Activated CD4-positive, alpha-beta T cell treated with anti-CD3 and anti-CD28 coated beads for 36 hours (primary cell): ENCODE measurements at regions of chr16 and their contacts with region 1.

Region 1: DNA sequence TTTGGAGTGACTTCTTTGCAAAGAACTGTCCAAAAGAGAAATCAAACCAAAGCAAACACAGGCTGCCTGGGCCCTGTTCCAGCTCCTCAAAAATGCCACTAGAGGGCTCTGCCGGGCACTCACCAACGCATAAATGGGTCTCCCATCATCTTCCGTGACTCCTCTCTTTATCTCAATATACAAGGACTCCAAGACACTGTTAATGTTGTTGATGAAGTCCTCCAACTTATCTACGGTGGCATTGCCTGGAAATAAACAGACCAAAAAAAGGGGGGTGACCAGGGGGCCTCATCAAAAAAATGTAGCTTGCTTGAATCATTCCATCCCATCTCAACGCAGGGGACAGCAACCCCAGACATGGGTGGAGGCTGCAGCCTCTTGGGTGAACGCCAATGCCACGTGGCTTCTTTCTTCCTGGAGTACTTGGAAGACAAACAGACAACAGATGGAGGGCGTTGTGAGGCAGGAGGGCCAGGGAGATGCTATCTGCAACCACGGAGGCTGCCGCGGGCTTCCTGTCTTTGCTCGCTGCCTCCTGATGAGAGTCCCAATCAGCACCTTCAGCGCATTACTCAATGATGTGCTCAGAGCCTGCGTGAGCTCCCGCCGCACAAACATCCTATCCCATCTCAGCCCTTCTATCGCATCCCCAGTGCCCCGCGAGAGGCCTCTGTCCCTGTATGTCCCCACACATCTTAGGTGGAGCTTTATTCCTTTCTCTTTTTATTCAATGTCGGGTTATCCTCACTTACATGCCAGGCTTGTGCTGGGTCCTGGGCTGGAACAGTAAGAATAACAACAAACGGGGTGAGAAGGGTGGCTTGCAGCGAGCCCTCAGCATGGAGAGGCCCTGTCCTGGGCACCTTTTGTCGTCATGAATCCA is 32.0 kb downstream of the KDM8 start:
- DNase-seq: peak; percentile 90
- ATAC-seq: peak; percentile 44
- H3K4me3 Mint-ChIP-seq: peak overlapping the region; percentile 65
- H3K27ac Mint-ChIP-seq: peak overlapping the region; percentile 100
- H3K4me1 Mint-ChIP-seq: peaks cover 99% of the 10 kb centered on the region
- H3K27me3 Mint-ChIP-seq: no peaks in the 10 kb centered on the region

Region 2: DNA sequence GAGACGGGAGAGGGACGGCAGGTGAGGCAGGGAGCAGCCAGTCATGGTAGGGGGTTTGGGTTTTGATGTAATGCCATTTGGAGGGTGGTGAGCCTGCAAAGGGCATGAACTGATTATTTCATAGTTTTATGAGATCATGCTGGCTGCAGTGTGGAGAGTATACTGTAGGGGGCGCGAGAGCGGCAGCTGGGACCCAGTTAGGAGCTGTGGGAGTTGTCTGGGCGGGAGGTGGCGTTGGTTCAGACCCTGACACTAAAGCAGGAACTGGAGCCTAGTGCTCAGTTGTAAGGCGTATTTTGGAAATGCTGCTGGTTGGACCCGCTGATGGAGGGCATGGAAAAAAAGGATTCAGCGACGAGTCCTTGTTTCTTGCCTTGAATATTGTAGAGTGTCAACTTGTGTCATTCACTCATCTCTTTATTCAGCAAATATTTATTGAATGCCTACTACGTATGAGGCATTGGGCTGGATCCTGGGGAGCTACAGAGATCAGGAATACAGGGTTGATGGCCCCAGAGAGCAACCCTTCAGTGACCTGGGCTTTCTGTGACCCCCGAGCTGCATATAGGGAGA is 55.7 kb before region 1 on chr16:
- CTCF ChIA-PET with region 1: interaction called, 20 read pairs
- POLR2A ChIA-PET with region 1: interaction called, 4 read pairs
- intact Hi-C with region 1: loop called (anchors 1 to 2 kb)
- DNase-seq: peak; percentile 95
- ATAC-seq: peak; percentile 91
- H3K4me3 Mint-ChIP-seq: no peak overlapping the region
- H3K27ac Mint-ChIP-seq: peak overlapping the region; percentile 80
- H3K4me1 Mint-ChIP-seq: peaks cover 48% of the 10 kb centered on the region
- H3K27me3 Mint-ChIP-seq: no peaks in the 10 kb centered on the region

Region 3: GRCh38 chr16:27253526-27253930 is 18.2 kb after region 1 on chr16:
- CTCF ChIA-PET with region 1: interaction called, 63 read pairs
- POLR2A ChIA-PET with region 1: interaction called, 30 read pairs
- intact Hi-C with region 1: loop called (anchors 1 to 2 kb)
- DNase-seq: no peak
- ATAC-seq: peak; percentile 63
- H3K4me3 Mint-ChIP-seq: peak overlapping the region; percentile 41
- H3K27ac Mint-ChIP-seq: peak overlapping the region; percentile 88
- H3K4me1 Mint-ChIP-seq: peaks cover 82% of the 10 kb centered on the region
- H3K27me3 Mint-ChIP-seq: no peaks in the 10 kb centered on the region

Region 4: DNA sequence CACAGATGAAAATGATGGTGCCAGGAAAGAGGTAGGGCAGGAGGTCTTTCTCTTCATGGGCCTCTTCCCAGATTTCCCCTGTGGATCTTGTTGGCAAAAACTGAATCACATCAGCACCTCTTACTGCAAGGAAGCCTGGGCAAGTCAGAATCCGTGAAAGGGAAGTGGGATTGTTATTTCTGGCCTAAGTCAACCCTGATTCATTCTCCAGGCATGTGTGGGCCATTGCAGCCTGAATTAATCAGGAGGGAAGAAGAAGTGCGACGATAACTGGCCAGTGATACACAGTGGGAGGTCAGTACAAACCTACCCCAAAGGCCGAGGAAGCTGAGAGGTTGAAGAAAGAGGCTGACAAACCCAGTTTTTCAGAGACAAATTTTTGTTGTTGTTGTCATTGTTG is 51.2 kb after region 1 on chr16:
- CTCF ChIA-PET with region 1: interaction called, 4 read pairs
- POLR2A ChIA-PET with region 1: interaction called, 6 read pairs
- intact Hi-C with region 1: loop called in 1 of 2 experiments (anchors 1 kb)
- DNase-seq: no peak
- ATAC-seq: no peak
- H3K4me3 Mint-ChIP-seq: no peak overlapping the region
- H3K27ac Mint-ChIP-seq: no peak overlapping the region
- H3K4me1 Mint-ChIP-seq: peaks cover 82% of the 10 kb centered on the region
- H3K27me3 Mint-ChIP-seq: peaks cover 3% of the 10 kb centered on the region

Region 5: DNA sequence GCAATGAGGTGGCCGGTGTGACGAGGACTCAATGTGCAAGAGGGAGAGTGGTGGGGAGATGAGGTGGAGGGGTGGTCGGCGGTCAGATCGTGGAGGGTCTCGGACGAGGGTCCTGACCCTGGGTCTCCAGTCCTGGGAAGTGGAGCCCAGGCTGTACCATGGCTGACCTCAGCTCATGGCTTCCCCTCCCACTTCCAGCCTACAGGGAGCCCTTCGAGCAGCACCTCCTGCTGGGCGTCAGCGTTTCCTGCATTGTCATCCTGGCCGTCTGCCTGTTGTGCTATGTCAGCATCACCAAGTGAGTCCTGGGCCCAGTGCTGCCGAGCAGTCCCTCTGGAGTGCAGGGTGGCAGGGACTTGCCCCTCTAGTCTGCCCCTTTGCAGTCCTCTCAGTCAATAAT is 120.3 kb after region 1 on chr16:
- CTCF ChIA-PET with region 1: interaction called, 14 read pairs
- POLR2A ChIA-PET with region 1: no interaction called
- intact Hi-C with region 1: no loop called
- DNase-seq: peak; percentile 75
- ATAC-seq: peak; percentile 66
- H3K4me3 Mint-ChIP-seq: no peak overlapping the region
- H3K27ac Mint-ChIP-seq: peak overlapping the region; percentile 16
- H3K4me1 Mint-ChIP-seq: peaks cover 13% of the 10 kb centered on the region
- H3K27me3 Mint-ChIP-seq: no peaks in the 10 kb centered on the region

Region 6: DNA sequence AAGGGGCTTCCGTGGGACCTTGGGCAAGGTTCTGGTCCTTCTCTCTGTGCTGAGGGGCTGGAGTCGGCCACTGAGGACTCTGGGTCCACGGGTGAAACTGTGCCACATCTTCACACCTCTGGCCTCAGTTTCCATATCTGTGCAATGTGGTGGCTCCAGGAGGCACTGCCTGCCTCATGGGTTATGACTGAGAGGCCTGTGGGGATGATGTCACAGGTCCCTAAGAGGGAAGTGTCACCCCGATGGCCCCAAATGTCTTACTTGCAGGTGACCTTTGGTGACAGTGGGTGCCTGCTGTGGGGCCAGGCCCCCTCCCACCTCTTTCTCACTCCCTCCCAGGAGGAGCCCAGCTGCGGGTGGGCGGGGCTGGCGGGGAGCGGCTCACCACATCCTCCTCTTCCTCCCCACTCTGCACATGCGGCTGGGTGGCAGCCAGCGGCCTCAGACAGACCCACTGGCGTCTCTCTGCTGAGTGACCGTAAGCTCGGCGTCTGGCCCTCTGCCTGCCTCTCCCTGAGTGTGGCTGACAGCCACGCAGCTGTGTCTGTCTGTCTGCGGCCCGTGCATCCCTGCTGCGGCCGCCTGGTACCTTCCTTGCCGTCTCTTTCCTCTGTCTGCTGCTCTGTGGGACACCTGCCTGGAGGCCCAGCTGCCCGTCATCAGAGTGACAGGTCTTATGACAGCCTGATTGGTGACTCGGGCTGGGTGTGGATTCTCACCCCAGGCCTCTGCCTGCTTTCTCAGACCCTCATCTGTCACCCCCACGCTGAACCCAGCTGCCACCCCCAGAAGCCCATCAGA is 166.7 kb after region 1 on chr16 and contains the start of gene IL21R:
- CTCF ChIA-PET with region 1: interaction called, 4 read pairs
- POLR2A ChIA-PET with region 1: interaction called, 13 read pairs
- intact Hi-C with region 1: loop called (anchors 1 to 2 kb)
- DNase-seq: peak; percentile 94
- ATAC-seq: peak; percentile 60
- H3K4me3 Mint-ChIP-seq: peak within 1 kb of the TSS; percentile 99
- H3K27ac Mint-ChIP-seq: peak within 1 kb of the TSS; percentile 97
- H3K4me1 Mint-ChIP-seq: peaks cover 38% of the 10 kb centered on the region
- H3K27me3 Mint-ChIP-seq: no peaks in the 10 kb centered on the region
- total RNA-seq, gene IL21R: 61.8 to 73.5 TPM

Region 7: GRCh38 chr16:27945233-27945973 is 710.1 kb after region 1 on chr16:
- CTCF ChIA-PET with region 1: no interaction called
- POLR2A ChIA-PET with region 1: no interaction called
- intact Hi-C with region 1: no loop called
- DNase-seq: no peak
- ATAC-seq: no peak
- H3K4me3 Mint-ChIP-seq: no peak overlapping the region
- H3K27ac Mint-ChIP-seq: no peak overlapping the region
- H3K4me1 Mint-ChIP-seq: no peaks in the 10 kb centered on the region
- H3K27me3 Mint-ChIP-seq: peaks cover 12% of the 10 kb centered on the region

Region 8: DNA sequence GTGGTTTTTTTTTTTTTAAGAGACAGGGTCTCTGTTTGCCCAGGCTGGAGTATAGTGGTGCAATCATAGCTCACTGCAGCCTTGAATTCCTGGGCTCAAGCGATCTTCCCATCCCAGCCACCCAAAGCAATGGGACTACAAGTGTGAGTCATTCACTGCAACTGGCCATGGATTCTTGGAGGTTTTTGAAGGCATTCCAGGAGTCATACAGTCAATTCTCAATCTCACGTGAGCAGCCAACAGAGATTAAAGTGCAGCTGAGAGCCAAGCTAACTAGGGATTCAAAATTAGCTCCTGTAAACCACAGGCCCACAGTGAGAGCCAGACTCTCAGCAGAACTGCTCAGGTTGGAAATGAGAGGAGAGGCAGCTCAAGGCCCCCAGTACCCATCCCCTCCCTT is 946.2 kb after region 1 on chr16:
- CTCF ChIA-PET with region 1: no interaction called
- POLR2A ChIA-PET with region 1: no interaction called
- intact Hi-C with region 1: loop called in 1 of 2 experiments (anchors 10 kb)
- DNase-seq: no peak
- ATAC-seq: peak; percentile 28
- H3K4me3 Mint-ChIP-seq: peak overlapping the region; percentile 64
- H3K27ac Mint-ChIP-seq: peak overlapping the region; percentile 98
- H3K4me1 Mint-ChIP-seq: peaks cover 78% of the 10 kb centered on the region
- H3K27me3 Mint-ChIP-seq: no peaks in the 10 kb centered on the region